Dorsolateral prefrontal cortex (tissue), 120 donors: ENCODE measurements at regions of chr13 and their contacts with region 1.

Region 1: DNA sequence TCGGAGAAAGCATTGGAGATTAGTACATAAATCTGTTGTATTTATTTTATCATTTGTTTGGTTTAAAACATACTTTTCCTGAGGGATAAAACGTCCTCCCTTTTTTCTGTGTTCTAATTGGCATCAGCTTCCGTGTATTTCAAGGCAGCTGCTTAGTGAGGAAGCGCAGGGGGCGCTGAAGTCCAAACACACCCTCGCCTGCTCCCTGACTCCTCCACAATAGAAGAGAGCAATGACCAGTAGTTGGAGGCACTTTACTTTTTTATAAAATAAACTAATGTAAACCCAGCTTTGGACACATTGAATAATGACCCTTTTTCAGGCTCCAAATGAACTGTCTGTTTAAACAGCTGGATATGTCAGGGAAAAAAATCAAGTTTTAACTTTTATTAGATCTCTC is 79.9 kb downstream of the RNASEH2B start:
- DNase-seq: no peak
- H3K4me3 ChIP-seq: no peak overlapping the region
- H3K27ac ChIP-seq: peak overlapping the region in 1 of 59 donors; percentile 93
- H3K27me3 ChIP-seq: no peaks in the 10 kb centered on the region
- CTCF ChIP-seq: peak in 15 of 56 donors; percentile 6 to 38 (median 19)

Region 2: DNA sequence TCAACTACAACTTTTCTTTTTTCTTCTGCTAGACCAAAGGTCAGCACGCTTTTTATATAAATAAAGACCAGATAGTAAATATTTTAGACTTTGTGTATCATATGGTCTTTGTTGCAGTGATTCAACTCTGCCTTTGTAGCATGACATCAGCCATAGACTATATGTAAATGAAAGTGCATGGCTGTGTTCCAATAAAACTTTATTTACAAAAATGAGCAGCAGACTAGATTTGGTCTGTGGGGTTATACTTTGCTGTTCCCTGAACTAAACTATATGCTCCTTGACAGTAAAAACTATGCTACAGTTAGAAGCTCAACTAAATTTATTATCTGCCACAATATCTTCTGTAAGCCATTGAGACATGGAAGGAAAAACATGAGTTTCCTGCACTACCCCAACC is 20.1 kb after region 1 on chr13:
- intact Hi-C with region 1: loop called in 1 of 2 experiments (anchors 2 kb)
- DNase-seq: no peak
- H3K4me3 ChIP-seq: no peak overlapping the region
- H3K27ac ChIP-seq: no peak overlapping the region
- H3K27me3 ChIP-seq: peaks cover 0 to 3% (median 0%) of the 10 kb centered on the region in 45 donors
- CTCF ChIP-seq: no peak

Region 3: DNA sequence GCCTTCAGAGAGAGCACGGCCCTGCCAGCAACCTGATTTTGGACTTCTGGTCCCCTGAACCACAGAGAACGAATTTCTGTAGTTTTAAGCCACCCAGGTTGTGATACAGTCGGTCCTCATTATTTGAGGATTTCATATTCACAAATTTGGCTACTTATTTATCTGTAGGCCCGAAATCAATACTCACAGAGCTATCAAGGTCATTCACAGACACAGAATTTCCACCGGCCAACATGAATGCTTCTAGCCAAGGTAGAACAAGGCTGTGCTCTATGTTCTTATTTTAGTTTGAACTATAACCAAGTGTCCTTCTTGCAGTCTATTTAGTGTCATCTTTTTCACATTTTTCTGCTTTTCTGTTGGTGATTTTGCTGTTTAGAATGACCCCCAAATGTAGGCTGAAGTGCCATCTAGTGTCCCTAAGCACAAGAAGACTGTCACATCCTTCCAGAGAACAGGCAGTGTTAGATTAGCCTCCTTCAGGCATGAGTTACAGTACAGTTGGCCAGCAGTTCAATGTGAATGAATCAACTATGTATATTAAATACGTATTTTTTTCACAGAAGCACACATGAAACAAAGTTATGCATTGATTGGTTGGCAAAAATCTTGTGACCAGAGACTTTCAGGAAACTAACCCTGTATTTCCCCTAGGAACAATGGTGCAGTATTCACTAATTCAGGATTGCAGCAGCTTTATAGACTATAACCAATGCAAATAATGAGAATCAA is 58.1 kb after region 1 on chr13:
- intact Hi-C with region 1: no loop called
- DNase-seq: peak in 1 of 10 donors; percentile 28
- H3K4me3 ChIP-seq: no peak overlapping the region
- H3K27ac ChIP-seq: no peak overlapping the region
- H3K27me3 ChIP-seq: no peaks in the 10 kb centered on the region
- CTCF ChIP-seq: peak in 14 of 56 donors; percentile 9 to 45 (median 20)